ENCODE measurements at regions of chr17 and their contacts with region 1.

Region 1: GRCh38 chr17:47970704-47971463 is at the start of gene CDK5RAP3:
- DNase-seq: peak; percentile 100
- ATAC-seq: peak; percentile 99
- total RNA-seq, gene CDK5RAP3: 50.0 TPM

Region 2: GRCh38 chr17:47810205-47810821 is 160.6 kb before region 1 on chr17:
- intact Hi-C with region 1: no loop called
- DNase-seq: no peak
- ATAC-seq: no peak

Region 3: DNA sequence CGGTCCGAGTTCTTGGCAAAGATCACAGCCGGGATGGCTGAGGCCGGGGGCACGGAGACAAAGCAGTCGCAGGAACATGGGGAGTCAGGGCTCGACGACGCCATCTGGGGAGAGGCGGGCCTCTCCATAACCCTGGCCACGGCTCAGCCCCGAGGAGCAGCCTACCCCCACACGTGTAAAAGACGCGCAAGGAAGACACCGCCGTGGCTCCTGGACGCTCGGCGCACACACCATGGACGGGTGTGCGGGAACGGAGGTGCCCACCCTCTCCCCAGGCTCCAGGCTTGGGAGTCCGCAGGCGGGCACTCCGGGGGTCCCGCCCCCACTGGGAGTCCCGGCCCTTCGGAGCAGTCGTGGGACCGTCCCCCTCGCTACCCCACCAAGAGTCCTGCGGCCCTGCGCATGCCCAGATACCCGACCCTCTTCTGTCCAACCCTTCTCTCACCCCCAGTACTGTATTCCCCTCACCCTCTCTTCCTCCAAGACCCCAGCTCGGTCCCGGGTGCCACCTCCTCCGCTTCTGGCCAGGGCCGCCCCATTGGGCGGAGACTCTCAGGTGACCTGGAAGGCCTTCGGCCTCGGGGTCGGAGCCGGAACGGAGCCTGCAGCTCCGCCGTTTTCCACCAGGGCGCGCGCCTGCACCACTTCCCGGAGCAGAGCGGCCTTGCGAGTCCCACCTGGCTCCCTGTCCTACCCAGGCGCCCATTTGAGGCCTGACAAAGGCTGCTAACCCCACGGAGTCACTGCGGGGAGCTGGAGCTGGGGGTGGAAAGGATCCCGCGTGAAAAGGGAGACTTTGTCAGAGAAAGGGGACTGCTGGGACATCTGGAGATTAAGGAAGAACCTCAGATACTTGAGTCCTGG is 129.9 kb before region 1 on chr17 and contains the start of gene SCRN2:
- intact Hi-C with region 1: loop called (anchors 1 kb)
- DNase-seq: peak; percentile 96
- ATAC-seq: peak; percentile 95
- total RNA-seq, gene SCRN2: 27.0 TPM

Region 4: DNA sequence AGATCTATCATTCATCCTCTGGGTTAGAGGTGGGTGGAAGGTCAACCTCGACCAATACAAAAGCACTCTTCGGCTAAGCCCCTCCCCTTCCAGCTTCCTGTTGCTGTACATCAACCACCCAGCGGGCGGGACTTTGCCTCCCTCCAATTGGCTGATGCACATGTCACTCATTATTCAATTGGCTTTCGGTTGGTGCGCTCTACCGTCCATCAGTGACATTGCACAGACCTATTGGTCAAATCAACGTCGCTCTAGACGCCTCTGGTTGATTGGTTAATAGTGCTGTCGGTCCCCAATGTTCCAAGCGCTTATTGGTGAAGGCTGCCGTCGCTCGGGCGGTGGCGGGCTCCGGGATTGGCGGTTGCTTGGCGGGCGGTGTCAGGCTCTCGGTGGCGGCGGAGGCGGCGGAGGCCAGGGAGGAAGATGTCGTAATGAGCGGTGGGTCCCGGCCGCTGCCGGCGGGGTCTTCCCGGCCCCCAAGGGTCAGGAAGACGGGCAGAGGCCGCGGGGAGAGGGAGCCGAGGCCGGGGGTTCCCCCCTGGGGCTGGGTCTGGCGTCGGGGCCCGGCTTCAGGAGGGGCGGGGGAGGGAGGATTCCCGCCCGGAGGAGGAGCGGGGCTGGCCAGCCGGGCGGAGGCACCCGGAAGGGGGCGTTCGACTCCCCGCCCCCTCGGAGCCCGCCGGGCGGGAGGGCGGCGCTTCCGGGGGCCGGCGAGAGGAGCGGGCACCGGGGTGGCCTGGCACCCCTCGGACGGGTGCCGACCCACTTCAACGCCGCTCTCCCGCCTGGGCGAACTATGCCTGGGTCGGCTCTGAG is 74.8 kb before region 1 on chr17 and contains the start of gene SP2:
- intact Hi-C with region 1: loop called (anchors 1 kb)
- DNase-seq: peak; percentile 99
- ATAC-seq: peak; percentile 95
- total RNA-seq, gene SP2: 11.7 TPM

Region 5: GRCh38 chr17:47949136-47949759 is 21.6 kb before region 1 on chr17:
- intact Hi-C with region 1: loop called (anchors 1 kb)
- DNase-seq: peak; percentile 96
- ATAC-seq: peak; percentile 90

Region 6: DNA sequence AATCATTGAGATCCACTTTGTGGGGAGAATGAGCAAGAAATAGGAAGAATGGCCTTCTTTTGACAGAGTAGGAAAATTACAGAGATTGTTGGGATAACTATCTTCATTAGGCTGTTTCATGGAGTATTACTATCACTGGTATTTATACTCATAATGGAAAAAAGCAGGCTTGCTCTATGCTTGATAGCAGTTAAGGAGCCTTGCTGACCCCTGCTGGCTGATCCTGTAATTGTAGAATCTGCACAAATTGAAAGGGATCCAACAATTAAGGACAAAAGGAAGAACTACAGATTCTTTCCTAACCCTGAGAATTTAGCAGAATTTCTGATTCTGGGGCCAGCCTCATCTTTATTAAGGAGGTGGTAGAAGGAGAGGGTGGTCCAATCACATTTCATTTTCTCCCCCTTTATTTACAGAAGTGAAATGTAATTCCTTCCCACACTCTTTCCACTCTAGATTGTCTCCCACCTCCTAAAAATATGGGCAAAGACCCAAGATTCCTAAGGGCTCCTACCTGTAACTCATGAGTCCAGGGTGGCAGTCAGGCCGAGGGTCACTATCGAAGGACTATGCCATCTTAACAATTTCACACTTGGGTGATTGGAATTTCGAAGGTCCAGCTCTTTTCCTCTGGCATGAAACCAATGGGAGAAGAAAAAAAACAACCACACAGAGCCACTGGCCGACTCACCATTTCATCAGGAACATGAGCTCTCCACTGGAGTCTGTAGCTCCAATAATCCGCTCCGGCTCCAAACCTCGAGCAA is 103.6 kb after region 1 on chr17:
- intact Hi-C with region 1: loop called (anchors 10 kb)
- DNase-seq: no peak
- ATAC-seq: peak; percentile 73